ENCODE measurements at regions of chr11 and their contacts with region 1.

Region 1: DNA sequence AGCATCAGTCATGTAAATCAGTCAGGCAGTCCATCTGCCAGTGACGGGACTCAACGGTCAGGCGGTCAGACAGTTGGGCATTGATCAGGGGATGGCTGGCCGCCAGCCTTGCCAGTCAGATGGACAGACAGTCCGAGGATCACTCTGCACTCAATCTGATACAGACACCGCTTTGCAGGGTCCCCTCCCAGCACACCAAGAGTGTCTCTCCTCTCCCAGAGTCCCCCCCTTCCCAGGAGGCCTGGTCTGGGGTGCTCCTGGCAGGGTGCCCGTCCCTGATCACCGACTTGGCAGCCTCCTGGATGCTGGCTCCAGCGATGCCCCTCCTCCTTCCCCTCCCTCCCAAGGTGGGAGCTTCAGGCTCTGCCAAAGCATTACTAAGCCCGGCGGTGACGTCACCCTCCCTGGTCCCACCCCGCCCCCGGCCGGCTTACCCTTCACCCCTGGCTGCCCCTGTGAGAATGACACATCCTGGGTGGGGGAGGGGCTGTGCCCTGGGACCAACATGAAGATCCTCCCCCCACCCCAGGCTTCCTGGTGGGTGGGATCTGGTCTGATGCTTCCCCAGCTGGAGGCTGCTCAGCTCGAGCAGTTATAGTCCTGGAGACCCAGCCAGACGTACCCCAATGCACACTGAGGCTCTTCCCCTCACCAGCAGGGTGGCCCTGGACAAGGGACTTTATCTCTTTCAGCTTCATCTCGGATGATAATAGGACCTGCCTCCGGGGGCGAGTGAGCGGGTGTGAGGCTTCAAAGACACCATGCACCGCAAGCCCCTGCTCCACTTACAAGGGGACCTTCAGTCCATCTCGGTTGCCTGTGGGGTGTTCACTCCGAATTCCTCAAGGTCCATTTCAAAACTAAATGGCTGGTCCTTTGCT is 69.2 kb downstream of the CD82 start:
- DNase-seq: peak; percentile 79
- ATAC-seq: peak; percentile 69

Region 2: GRCh38 chr11:44905131-44905866 is 270.7 kb after region 1 on chr11:
- intact Hi-C with region 1: loop called (anchors 5 kb)
- DNase-seq: no peak
- ATAC-seq: no peak

Measured in left ventricle myocardium superior (tissue), 1 donor.